ENCODE measurements at regions of chr19 and their contacts with region 1.

Region 1: DNA sequence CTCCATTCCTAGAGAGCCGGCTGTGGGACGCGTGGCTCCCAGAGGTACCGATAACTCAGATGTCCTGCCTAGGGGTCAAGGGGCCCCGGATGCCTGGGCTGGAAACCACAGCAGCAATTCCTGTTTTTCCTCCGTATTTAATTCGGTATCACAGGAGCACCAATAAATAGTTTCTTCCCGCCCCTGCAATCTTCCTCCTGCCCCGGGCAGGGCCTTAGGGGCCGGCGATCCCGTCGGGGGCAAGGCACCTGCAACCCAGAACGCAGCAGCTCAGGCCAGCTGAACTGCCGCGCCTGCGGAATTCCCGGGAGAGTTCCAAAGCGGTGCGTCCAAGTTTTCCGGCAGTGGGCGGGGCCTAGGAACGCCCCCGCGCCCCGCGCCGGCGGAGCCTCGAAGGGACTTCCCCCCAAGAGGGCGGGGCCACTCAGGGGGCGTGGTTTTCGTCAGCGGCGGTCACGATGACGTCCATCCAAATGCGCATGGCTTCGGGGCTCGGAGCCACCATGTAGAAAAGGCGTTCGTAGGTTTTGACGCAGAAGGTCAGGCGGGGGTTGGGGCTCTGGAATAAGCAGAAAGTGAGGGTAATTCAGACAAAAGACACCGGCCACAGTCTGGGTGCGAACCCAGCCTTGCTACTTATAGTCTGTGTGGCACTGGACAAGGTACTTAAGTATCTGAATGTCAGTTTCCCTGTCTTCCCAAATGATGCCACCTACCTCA is 9.7 kb upstream of the LYPD3 start:
- DNase-seq: peak; percentile 98
- ATAC-seq: peak; percentile 98
- H3K4me3 ChIP-seq: peak overlapping the region; percentile 45 to 66 (median 52)
- H3K4me3 Mint-ChIP-seq: peak overlapping the region; percentile 90
- H3K27ac ChIP-seq: peak overlapping the region; percentile 50 to 84
- H3K27ac Mint-ChIP-seq: peak overlapping the region; percentile 92
- H3K4me1 ChIP-seq: peaks cover 4 to 13% of the 10 kb centered on the region in 2 donors
- H3K4me1 Mint-ChIP-seq: peaks cover 13% of the 10 kb centered on the region
- H3K27me3 ChIP-seq: no peaks in the 10 kb centered on the region
- H3K27me3 Mint-ChIP-seq: no peaks in the 10 kb centered on the region
- CTCF ChIP-seq: no peak

Region 2: GRCh38 chr19:43489310-43489709 is 14.2 kb after region 1 on chr19:
- CTCF ChIA-PET with region 1: no interaction called
- POLR2A ChIA-PET with region 1: interaction called, 11 read pairs
- intact Hi-C with region 1: no loop called
- DNase-seq: no peak
- ATAC-seq: no peak
- H3K4me3 ChIP-seq: no peak overlapping the region
- H3K4me3 Mint-ChIP-seq: no peak overlapping the region
- H3K27ac ChIP-seq: no peak overlapping the region
- H3K27ac Mint-ChIP-seq: peak overlapping the region; percentile 75
- H3K4me1 ChIP-seq: peaks cover 32 to 36% of the 10 kb centered on the region in 2 donors
- H3K4me1 Mint-ChIP-seq: peaks cover 27% of the 10 kb centered on the region
- H3K27me3 ChIP-seq: no peaks in the 10 kb centered on the region
- H3K27me3 Mint-ChIP-seq: no peaks in the 10 kb centered on the region
- CTCF ChIP-seq: no peak

Region 3: DNA sequence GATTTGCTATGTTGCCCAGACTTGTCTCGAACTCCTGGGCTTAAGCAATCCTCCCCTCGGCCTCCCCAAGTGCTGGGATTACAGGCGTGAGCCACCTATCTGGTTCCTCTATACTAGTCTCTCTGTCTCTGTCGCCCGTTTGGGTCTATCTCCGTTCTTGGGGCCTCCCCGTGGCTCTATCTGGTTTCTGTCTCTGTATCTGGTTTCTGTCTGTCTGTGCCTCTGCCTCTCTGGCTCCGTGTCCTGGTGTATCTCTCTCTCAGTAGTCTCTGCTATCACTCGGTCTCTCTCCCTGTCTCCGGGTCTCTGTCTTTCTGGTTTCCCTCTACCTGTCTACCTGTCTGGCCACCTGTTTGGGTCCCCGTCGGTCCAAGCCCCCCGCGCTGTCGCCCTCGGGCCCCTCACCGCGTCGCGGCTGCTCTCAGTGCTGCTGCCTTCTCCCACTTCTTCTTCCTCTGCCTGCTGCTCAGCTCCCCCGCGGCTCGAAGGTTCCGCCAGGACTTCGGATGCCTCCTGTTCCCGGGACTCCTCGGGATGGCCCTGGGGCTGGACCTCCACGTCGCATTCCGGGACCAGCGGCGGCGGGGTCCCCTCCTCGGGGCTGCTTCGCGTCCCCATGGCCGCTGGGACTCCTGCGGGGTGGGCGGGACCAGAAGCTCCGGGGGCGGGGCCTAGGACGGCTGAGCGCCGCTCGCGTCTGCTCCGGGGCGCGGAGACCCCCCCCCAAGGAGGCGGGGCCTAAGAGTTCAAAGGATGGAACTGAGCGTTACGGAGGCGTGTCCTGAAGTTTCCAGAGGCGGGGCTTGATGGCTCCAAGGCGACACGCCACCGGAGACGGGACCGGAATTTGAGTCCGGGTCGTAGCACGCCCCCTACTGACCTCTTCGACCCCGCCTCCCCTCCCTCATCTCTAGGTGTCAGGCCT is 28.6 kb after region 1 on chr19:
- CTCF ChIA-PET with region 1: interaction called, 6 read pairs
- POLR2A ChIA-PET with region 1: interaction called, 5 read pairs
- intact Hi-C with region 1: loop called (anchors 1 kb)
- DNase-seq: peak; percentile 97
- ATAC-seq: peak; percentile 95
- H3K4me3 ChIP-seq: peak overlapping the region; percentile 65 to 97 (median 76)
- H3K4me3 Mint-ChIP-seq: peak overlapping the region; percentile 95
- H3K27ac ChIP-seq: peak overlapping the region; percentile 80 to 82
- H3K27ac Mint-ChIP-seq: peak overlapping the region; percentile 98
- H3K4me1 ChIP-seq: peaks cover 12 to 22% of the 10 kb centered on the region in 2 donors
- H3K4me1 Mint-ChIP-seq: peaks cover 23% of the 10 kb centered on the region
- H3K27me3 ChIP-seq: no peaks in the 10 kb centered on the region
- H3K27me3 Mint-ChIP-seq: no peaks in the 10 kb centered on the region
- CTCF ChIP-seq: no peak

Measured in B cell (primary cell).